Naive thymus-derived CD4-positive, alpha-beta T cell (primary cell): ENCODE measurements at regions of chr18 and their contacts with region 1.

Region 1: GRCh38 chr18:62584241-62585120 is 61.7 kb downstream of the ZCCHC2 start:
- DNase-seq: peak; percentile 61 to 85 (median 82)
- ATAC-seq: peak; percentile 99
- H3K4me3 ChIP-seq: no peak overlapping the region
- H3K4me3 Mint-ChIP-seq: peak overlapping the region; percentile 18 to 65 (median 58)
- H3K27ac ChIP-seq: no peak overlapping the region
- H3K27ac Mint-ChIP-seq: peak overlapping the region; percentile 26 to 83 (median 72)
- H3K4me1 ChIP-seq: peaks cover 18 to 22% of the 10 kb centered on the region in 2 donors
- H3K4me1 Mint-ChIP-seq: peaks cover 17 to 50% (median 32%) of the 10 kb centered on the region in 7 donors
- H3K27me3 ChIP-seq: no peaks in the 10 kb centered on the region
- H3K27me3 Mint-ChIP-seq: no peaks in the 10 kb centered on the region

Region 2: DNA sequence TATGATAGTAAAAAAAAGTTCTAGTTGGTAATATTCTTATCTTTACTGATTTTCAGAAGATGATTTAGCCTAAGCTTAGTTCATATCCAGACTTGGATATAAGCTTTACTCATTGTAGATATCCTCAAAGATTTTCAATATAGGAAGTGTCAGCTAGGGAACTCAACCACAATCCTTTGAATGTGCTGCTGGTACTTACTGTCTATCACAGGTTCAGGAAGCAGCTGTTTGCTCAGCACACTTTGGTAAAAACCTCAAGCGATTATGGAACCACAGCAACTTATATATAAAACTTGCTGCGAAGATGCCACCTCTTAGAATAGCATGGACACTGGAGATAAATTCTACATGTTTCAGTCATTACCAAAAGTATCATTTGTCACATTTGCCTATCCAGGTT is 319.5 kb before region 1 on chr18:
- CTCF ChIA-PET with region 1: no interaction called
- POLR2A ChIA-PET with region 1: no interaction called
- intact Hi-C with region 1: loop called in 1 of 2 experiments (anchors 10 kb)
- DNase-seq: no peak
- ATAC-seq: no peak
- H3K4me3 ChIP-seq: no peak overlapping the region
- H3K4me3 Mint-ChIP-seq: no peak overlapping the region
- H3K27ac ChIP-seq: no peak overlapping the region
- H3K27ac Mint-ChIP-seq: peak overlapping the region in 1 of 9 donors; percentile 14
- H3K4me1 ChIP-seq: no peaks in the 10 kb centered on the region
- H3K4me1 Mint-ChIP-seq: peaks cover 2 to 15% (median 8%) of the 10 kb centered on the region in 7 donors
- H3K27me3 ChIP-seq: no peaks in the 10 kb centered on the region
- H3K27me3 Mint-ChIP-seq: no peaks in the 10 kb centered on the region

Region 3: DNA sequence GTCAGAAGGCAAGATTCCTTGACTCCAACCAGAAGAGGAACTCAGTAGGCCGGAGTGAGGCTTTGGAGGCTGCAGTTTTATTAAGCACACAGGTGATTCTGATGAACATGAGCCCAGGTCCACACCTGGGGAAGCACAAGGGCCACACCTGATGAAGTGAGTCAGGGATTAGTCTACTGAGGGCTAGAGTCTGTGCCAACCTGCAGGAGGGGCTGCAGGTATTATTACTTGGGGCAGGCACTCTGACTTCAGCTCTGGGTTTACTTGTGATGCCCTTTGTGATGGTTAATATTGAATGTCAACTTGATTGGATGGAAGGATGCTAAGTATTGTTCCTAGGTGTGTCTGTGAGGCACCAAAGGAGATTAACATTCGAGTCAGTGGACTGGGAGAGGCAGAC is 136.8 kb before region 1 on chr18:
- CTCF ChIA-PET with region 1: no interaction called
- POLR2A ChIA-PET with region 1: interaction called, 3 read pairs
- intact Hi-C with region 1: loop called in 1 of 2 experiments (anchors 1 kb)
- DNase-seq: no peak
- ATAC-seq: no peak
- H3K4me3 ChIP-seq: no peak overlapping the region
- H3K4me3 Mint-ChIP-seq: no peak overlapping the region
- H3K27ac ChIP-seq: no peak overlapping the region
- H3K27ac Mint-ChIP-seq: no peak overlapping the region
- H3K4me1 ChIP-seq: no peaks in the 10 kb centered on the region
- H3K4me1 Mint-ChIP-seq: peaks cover 0 to 12% (median 0%) of the 10 kb centered on the region in 7 donors
- H3K27me3 ChIP-seq: no peaks in the 10 kb centered on the region
- H3K27me3 Mint-ChIP-seq: peaks cover 0 to 2% (median 0%) of the 10 kb centered on the region in 5 donors

Region 4: GRCh38 chr18:62505669-62506494 is 78.6 kb before region 1 on chr18:
- CTCF ChIA-PET with region 1: interaction called, 3 read pairs
- POLR2A ChIA-PET with region 1: no interaction called
- intact Hi-C with region 1: loop called in 1 of 2 experiments (anchors 5 kb)
- DNase-seq: peak in 5 of 9 donors; percentile 37 to 49 (median 47)
- ATAC-seq: peak; percentile 58
- H3K4me3 ChIP-seq: peak overlapping the region; percentile 77
- H3K4me3 Mint-ChIP-seq: peak overlapping the region; percentile 82 to 94 (median 88)
- H3K27ac ChIP-seq: peak overlapping the region; percentile 67
- H3K27ac Mint-ChIP-seq: peak overlapping the region; percentile 90 to 100 (median 96)
- H3K4me1 ChIP-seq: peaks cover 5 to 17% of the 10 kb centered on the region in 2 donors
- H3K4me1 Mint-ChIP-seq: peaks cover 4 to 30% (median 21%) of the 10 kb centered on the region in 7 donors
- H3K27me3 ChIP-seq: no peaks in the 10 kb centered on the region
- H3K27me3 Mint-ChIP-seq: no peaks in the 10 kb centered on the region

Region 5: GRCh38 chr18:62982600-62983251 is 398.2 kb after region 1 on chr18:
- CTCF ChIA-PET with region 1: interaction called, 6 read pairs
- POLR2A ChIA-PET with region 1: no interaction called
- intact Hi-C with region 1: loop called (anchors 1 kb)
- DNase-seq: peak in 8 of 9 donors; percentile 29 to 60 (median 52)
- ATAC-seq: peak; percentile 70
- H3K4me3 ChIP-seq: peak overlapping the region; percentile 11
- H3K4me3 Mint-ChIP-seq: peak overlapping the region in 8 of 10 donors; percentile 33 to 78 (median 60)
- H3K27ac ChIP-seq: no peak overlapping the region
- H3K27ac Mint-ChIP-seq: peak overlapping the region in 1 of 9 donors; percentile 80
- H3K4me1 ChIP-seq: no peaks in the 10 kb centered on the region
- H3K4me1 Mint-ChIP-seq: peaks cover 0 to 7% (median 5%) of the 10 kb centered on the region in 7 donors
- H3K27me3 ChIP-seq: no peaks in the 10 kb centered on the region
- H3K27me3 Mint-ChIP-seq: peaks cover 0 to 2% (median 0%) of the 10 kb centered on the region in 5 donors